Endothelial cell of umbilical vein (primary cell): ENCODE measurements at regions of chr2 and their contacts with region 1.

Region 1: DNA sequence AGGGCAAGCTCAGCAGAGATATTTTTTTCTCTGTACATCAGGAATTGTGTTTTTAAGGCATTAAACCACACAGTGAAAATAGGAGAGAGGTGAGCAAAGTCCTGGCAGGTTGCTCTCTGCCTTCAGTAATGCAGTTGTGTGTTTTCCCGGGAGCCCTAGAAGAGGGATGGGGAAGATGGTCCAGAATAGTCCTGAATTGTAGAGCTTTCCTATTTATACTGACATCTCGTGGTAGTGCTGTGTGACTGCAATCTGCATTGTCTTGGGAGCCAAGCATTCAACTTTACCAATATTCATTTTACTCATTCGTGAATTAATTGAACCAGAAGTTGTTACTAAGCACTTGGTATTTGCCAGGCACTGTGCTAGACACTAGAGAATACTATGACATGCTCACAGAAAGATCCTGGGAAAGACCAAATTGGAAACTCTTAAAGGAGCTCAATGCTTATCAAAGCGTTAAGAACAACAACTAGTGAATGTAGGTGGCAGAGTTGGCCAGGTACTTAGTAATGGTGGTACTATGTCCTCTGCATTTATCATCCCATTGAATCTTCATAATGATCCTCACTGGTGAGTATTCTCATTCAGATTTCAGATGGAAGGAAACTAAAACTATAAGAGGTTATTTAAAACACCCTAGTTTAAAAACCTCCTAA is 214.6 kb downstream of the TRIB2 start:
- DNase-seq: peak; percentile 59
- H3K4me3 ChIP-seq: no peak overlapping the region
- H3K27ac ChIP-seq: no peak overlapping the region
- H3K4me1 ChIP-seq: peaks cover 9% of the 10 kb centered on the region
- H3K27me3 ChIP-seq: no peaks in the 10 kb centered on the region
- CTCF ChIP-seq: peak; percentile 74 to 78
- POLR2A ChIP-seq: no peak

Region 2: GRCh38 chr2:11863513-11864328 is 1067.6 kb before region 1 on chr2:
- CTCF ChIA-PET with region 1: interaction called, 6 read pairs
- POLR2A ChIA-PET with region 1: no interaction called
- dilution Hi-C with region 1: no loop called
- intact Hi-C with region 1: loop called (anchors 1 kb)
- DNase-seq: peak; percentile 88
- H3K4me3 ChIP-seq: no peak overlapping the region
- H3K27ac ChIP-seq: no peak overlapping the region
- H3K4me1 ChIP-seq: peaks cover 7% of the 10 kb centered on the region
- H3K27me3 ChIP-seq: peaks cover 3 to 11% of the 10 kb centered on the region in 2 experiments
- CTCF ChIP-seq: peak; percentile 80 to 93
- POLR2A ChIP-seq: no peak

Region 3: GRCh38 chr2:12555012-12555645 is 376.2 kb before region 1 on chr2:
- CTCF ChIA-PET with region 1: interaction called, 14 read pairs
- POLR2A ChIA-PET with region 1: no interaction called
- dilution Hi-C with region 1: no loop called
- intact Hi-C with region 1: loop called (anchors 1 kb)
- DNase-seq: peak; percentile 85
- H3K4me3 ChIP-seq: no peak overlapping the region
- H3K27ac ChIP-seq: no peak overlapping the region
- H3K4me1 ChIP-seq: peaks cover 23% of the 10 kb centered on the region
- H3K27me3 ChIP-seq: no peaks in the 10 kb centered on the region
- CTCF ChIP-seq: no peak
- POLR2A ChIP-seq: no peak

Region 4: DNA sequence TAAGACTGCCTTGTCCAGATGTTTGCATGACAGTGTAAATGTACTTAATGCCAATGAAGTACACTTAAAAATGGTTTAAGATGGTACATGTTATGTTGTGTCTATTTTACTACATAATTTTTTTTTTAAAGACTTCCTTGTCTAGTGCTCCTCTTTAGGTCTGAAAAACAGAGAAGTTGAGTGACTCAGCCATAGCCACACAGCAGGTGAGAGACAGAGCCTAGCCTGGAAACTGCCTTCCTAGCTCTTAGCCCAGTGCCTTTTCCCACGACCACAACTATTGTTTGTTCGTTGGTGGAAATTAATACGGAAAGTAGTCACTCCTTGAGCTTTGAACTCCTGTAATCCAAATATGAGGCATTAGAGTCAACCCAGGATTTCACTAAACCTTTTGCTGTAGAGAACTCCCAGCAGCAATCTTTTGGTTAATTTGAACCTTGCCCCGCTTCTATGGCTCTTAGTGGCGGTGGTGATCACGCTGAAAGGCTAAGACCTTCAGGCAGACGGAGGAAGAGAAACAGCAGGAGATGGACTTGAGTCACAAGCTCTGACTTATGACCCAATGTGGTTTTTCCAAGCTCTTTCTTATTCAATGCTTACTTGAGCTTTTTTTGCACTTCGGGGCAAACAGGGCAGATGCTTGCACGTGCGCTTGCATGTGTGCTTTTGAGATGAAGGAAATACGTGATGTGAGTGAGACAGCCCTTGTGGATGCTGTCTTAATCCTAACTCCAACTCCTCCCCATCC is 193.4 kb before region 1 on chr2:
- CTCF ChIA-PET with region 1: interaction called, 13 read pairs
- POLR2A ChIA-PET with region 1: no interaction called
- dilution Hi-C with region 1: no loop called
- intact Hi-C with region 1: no loop called
- DNase-seq: peak; percentile 9
- H3K4me3 ChIP-seq: no peak overlapping the region
- H3K27ac ChIP-seq: no peak overlapping the region
- H3K4me1 ChIP-seq: peaks cover 5% of the 10 kb centered on the region
- H3K27me3 ChIP-seq: no peaks in the 10 kb centered on the region
- CTCF ChIP-seq: no peak
- POLR2A ChIP-seq: no peak

Region 5: GRCh38 chr2:12819103-12819475 is 112.2 kb before region 1 on chr2:
- CTCF ChIA-PET with region 1: interaction called, 11 read pairs
- POLR2A ChIA-PET with region 1: no interaction called
- dilution Hi-C with region 1: no loop called
- intact Hi-C with region 1: loop called (anchors 1 kb)
- DNase-seq: peak; percentile 97
- H3K4me3 ChIP-seq: peak overlapping the region in 1 of 3 experiments; percentile 41
- H3K27ac ChIP-seq: peak overlapping the region; percentile 96
- H3K4me1 ChIP-seq: peaks cover 32% of the 10 kb centered on the region
- H3K27me3 ChIP-seq: no peaks in the 10 kb centered on the region
- CTCF ChIP-seq: no peak
- POLR2A ChIP-seq: peak; percentile 52

Region 6: DNA sequence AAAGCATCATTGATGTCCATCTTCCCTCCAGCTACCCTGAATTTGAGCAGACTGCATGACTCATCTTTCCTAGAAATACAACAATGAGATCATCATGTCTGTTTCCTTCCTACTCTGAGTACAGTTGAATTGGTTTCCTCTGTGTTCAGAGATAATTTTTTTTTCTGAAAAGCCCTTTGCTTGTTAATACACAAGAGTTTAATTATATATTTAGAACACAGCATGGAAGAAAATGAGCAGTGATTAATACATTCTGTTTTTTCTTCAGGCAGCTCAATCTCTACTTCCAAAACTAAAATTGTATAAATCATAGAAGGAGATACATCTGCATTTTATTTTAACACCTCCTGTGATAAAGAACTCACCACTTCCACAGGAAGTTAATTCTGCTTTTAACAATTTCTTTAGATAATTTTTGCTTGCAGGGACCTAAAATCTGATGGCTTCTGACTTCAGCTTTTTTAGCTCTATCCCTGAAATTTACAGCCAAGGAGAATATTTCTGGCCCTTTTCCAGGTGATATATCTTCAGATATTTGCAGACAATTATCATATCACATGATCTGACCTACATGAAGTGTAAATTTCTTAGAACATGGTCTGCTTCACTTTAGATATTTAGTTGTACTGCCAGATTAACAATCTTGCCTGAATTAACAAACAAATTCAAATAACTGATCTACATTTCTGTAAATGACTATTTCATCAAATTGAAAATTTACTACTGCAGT is 34.4 kb after region 1 on chr2:
- CTCF ChIA-PET with region 1: interaction called, 20 read pairs
- POLR2A ChIA-PET with region 1: no interaction called
- dilution Hi-C with region 1: no loop called
- intact Hi-C with region 1: no loop called
- DNase-seq: peak; percentile 84
- H3K4me3 ChIP-seq: peak overlapping the region in 1 of 3 experiments; percentile 30
- H3K27ac ChIP-seq: peak overlapping the region; percentile 67
- H3K4me1 ChIP-seq: peaks cover 17% of the 10 kb centered on the region
- H3K27me3 ChIP-seq: no peaks in the 10 kb centered on the region
- CTCF ChIP-seq: no peak
- POLR2A ChIP-seq: peak; percentile 43

Region 7: DNA sequence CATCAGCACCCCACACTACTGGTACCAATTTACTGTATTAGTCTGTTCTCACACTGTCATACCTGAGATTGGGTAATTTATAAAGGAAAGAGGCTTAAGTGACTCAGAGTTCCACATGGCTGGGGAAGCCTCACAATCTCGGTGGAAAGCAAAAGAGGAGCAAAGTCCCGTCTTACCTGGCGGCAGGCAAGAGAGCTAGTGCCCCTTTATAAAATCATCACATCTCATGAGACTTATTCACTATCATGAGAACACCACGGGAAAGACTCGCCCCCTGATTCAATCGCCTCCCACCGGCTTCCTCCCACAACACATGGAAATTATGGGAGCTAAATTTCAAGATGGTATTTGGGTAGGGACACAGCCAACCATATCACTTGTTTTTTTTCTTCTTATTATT is 502.6 kb after region 1 on chr2:
- CTCF ChIA-PET with region 1: no interaction called
- POLR2A ChIA-PET with region 1: no interaction called
- dilution Hi-C with region 1: no loop called
- intact Hi-C with region 1: no loop called
- DNase-seq: no peak
- H3K4me3 ChIP-seq: no peak overlapping the region
- H3K27ac ChIP-seq: no peak overlapping the region
- H3K4me1 ChIP-seq: no peaks in the 10 kb centered on the region
- H3K27me3 ChIP-seq: no peaks in the 10 kb centered on the region
- CTCF ChIP-seq: no peak
- POLR2A ChIP-seq: no peak